PC-9 (cell line): ENCODE measurements at regions of chr5 and their contacts with region 1.

Region 1: DNA sequence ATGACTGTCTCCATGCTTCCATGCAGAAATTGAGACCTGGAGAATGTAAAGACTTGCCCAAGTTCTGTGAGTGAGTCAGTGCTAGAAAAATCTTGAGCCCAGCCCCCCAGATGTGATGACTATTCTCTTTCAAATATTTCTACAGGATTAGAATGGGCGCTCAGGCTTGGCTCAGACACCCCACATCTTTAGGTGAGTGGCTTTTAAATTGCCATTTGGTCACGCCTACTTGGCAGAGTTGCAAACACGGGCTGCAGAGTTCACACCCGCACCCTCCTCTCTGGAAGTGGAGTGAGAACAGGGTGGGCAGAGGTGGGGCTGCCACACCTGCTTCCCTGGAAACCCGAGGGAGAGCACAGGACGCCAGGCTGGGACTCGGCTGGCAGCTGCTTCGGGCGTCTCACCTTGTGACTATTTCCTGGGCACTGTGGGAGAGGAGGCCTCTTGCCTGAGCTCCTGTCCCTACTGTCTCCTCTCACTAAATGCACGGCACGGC is 37.6 kb downstream of the ROPN1L start:
- DNase-seq: peak; percentile 97 to 98
- H3K4me3 ChIP-seq: peak overlapping the region; percentile 12; the same call in 1 of the 2 replicates
- H3K27ac ChIP-seq: peak overlapping the region; percentile 79
- H3K4me1 ChIP-seq: peaks cover 50% of the 10 kb centered on the region
- H3K27me3 ChIP-seq: no peaks in the 10 kb centered on the region
- CTCF ChIP-seq: no peak

Region 2: DNA sequence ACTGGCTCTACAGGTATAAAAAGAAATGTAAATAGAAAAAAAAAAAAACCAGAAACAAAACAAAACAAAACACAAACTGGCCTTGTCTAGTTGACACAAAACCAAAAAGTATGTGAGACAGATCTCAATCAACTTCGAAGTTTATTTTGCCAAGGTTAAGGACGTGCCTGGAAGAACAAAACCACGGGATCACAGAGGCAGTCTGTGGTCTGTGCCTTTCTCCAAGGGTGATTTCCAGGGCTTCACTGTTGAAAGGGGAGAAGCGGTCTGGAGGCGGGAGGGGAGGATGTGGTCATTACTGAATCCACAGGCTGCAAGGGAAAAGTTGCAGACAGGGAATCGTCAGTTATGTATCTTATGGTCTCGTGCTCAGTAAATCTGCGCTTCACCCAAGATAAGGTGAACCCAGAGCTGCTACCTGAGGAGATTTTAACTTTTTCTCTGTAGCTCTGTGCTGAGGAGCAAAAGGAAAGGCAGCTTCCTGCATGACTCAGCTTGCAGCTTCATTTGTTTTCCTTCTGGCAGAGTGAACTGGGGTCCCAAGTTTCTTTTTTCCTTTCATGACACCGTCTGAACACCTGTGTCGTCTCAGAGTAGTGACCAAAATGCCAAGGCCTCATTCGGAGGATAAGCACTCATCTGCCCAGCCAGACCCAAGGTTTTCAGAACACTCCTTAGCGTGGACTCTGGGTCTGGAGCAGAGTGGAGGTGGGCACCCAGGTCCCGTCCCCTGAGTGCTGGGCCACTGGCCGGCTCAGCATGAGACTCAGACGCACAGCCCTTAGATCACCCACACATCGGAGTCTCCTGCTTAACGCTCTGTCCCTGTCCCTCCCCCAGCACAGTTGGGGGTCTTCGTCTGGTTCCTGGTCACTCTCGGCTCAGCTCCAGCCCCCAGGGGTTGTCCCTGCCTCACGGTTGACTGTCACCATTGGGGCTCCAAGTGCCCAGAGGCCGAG is 11.8 kb before region 1 on chr5:
- CTCF ChIA-PET with region 1: no interaction called
- POLR2A ChIA-PET with region 1: no interaction called
- intact Hi-C with region 1: loop called (anchors 1 kb)
- DNase-seq: peak; percentile 73
- H3K4me3 ChIP-seq: no peak overlapping the region; the same call in 1 of the 2 replicates
- H3K27ac ChIP-seq: peak overlapping the region; percentile 80
- H3K4me1 ChIP-seq: peaks cover 22% of the 10 kb centered on the region
- H3K27me3 ChIP-seq: no peaks in the 10 kb centered on the region
- CTCF ChIP-seq: no peak

Region 3: GRCh38 chr5:10534561-10535525 is 55.6 kb after region 1 on chr5:
- CTCF ChIA-PET with region 1: no interaction called
- POLR2A ChIA-PET with region 1: interaction called, 13 read pairs
- intact Hi-C with region 1: no loop called
- DNase-seq: no peak
- H3K4me3 ChIP-seq: no peak overlapping the region
- H3K27ac ChIP-seq: no peak overlapping the region
- H3K4me1 ChIP-seq: 0 out of 2 replicates have a peak, but pooled peaks cover 8% of the 10 kb centered on the region
- H3K27me3 ChIP-seq: no peaks in the 10 kb centered on the region
- CTCF ChIP-seq: no peak

Region 4: GRCh38 chr5:10601246-10602030 is 122.2 kb after region 1 on chr5:
- CTCF ChIA-PET with region 1: interaction called, 5 read pairs
- POLR2A ChIA-PET with region 1: no interaction called
- intact Hi-C with region 1: loop called (anchors 1 kb)
- DNase-seq: peak; percentile 93 to 99
- H3K4me3 ChIP-seq: peak overlapping the region; percentile 4; the same call in 1 of the 2 replicates
- H3K27ac ChIP-seq: peak overlapping the region; percentile 46
- H3K4me1 ChIP-seq: peaks cover 41% of the 10 kb centered on the region
- H3K27me3 ChIP-seq: no peaks in the 10 kb centered on the region
- CTCF ChIP-seq: no peak

Region 5: DNA sequence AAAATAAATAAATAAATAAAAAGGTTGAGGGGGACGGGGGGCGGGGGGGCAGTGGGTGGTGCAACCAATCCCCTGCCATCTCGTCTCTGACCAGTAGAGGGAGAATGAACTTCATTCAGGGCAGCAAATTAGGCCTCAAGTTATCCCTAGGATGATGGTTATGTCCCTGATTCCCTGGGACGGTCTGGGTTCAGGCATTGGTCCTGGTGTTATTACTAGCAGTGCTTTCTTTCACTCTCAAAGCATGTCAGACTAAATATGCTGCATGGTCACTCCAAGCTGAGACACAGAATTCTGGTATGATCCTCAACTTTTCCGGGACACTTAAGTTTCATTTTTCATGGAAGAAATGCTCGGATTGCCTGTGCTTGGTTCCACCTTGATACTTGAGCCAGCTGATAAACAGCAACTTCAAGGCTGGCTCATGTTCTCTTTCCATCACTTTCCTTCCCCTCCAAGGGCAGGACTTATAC is 222.3 kb after region 1 on chr5:
- CTCF ChIA-PET with region 1: no interaction called
- POLR2A ChIA-PET with region 1: no interaction called
- intact Hi-C with region 1: loop called (anchors 1 kb)
- DNase-seq: peak in 1 of 2 experiments; percentile 44
- H3K4me3 ChIP-seq: peak overlapping the region; percentile 16; the same call in 1 of the 2 replicates
- H3K27ac ChIP-seq: peak overlapping the region; percentile 96
- H3K4me1 ChIP-seq: peaks cover 63% of the 10 kb centered on the region
- H3K27me3 ChIP-seq: no peaks in the 10 kb centered on the region
- CTCF ChIP-seq: peak; percentile 81

Region 6: GRCh38 chr5:10801931-10802659 is 322.8 kb after region 1 on chr5:
- CTCF ChIA-PET with region 1: no interaction called
- POLR2A ChIA-PET with region 1: no interaction called
- intact Hi-C with region 1: no loop called
- DNase-seq: peak in 1 of 2 experiments; percentile 32
- H3K4me3 ChIP-seq: no peak overlapping the region
- H3K27ac ChIP-seq: no peak overlapping the region
- H3K4me1 ChIP-seq: no peaks in the 10 kb centered on the region
- H3K27me3 ChIP-seq: no peaks in the 10 kb centered on the region
- CTCF ChIP-seq: no peak